ENCODE measurements at regions of chr6 and their contacts with region 1.

Region 1: GRCh38 chr6:35522660-35523658 is 10.3 kb upstream of the TULP1 start:
- DNase-seq: peak; percentile 59
- H3K4me3 ChIP-seq: peak overlapping the region in 1 of 3 experiments; percentile 21
- H3K27ac ChIP-seq: no peak overlapping the region
- H3K4me1 ChIP-seq: peaks cover 9% of the 10 kb centered on the region
- H3K27me3 ChIP-seq: no peaks in the 10 kb centered on the region
- CTCF ChIP-seq: peak; percentile 73 to 94

Region 2: GRCh38 chr6:34248727-34249551 is 1274.0 kb before region 1 on chr6 and contains the start of gene SMIM29:
- CTCF ChIA-PET with region 1: no interaction called
- dilution Hi-C with region 1: no loop called
- in situ Hi-C with region 1: no loop called
- intact Hi-C with region 1: no loop called
- DNase-seq: peak; percentile 94
- H3K4me3 ChIP-seq: peak within 1 kb of the TSS; percentile 83 to 95 (median 84)
- H3K27ac ChIP-seq: peak within 1 kb of the TSS; percentile 48
- H3K4me1 ChIP-seq: peaks cover 47% of the 10 kb centered on the region
- H3K27me3 ChIP-seq: no peaks in the 10 kb centered on the region
- CTCF ChIP-seq: peak; percentile 38 to 87
- total RNA-seq, gene SMIM29: 20.3 to 40.6 TPM

Region 3: GRCh38 chr6:35544523-35545313 is 21.8 kb after region 1 on chr6:
- CTCF ChIA-PET with region 1: interaction called, 29 read pairs
- dilution Hi-C with region 1: no loop called
- in situ Hi-C with region 1: no loop called
- intact Hi-C with region 1: no loop called
- DNase-seq: peak; percentile 58
- H3K4me3 ChIP-seq: no peak overlapping the region
- H3K27ac ChIP-seq: no peak overlapping the region
- H3K4me1 ChIP-seq: no peaks in the 10 kb centered on the region
- H3K27me3 ChIP-seq: no peaks in the 10 kb centered on the region
- CTCF ChIP-seq: no peak

Region 4: DNA sequence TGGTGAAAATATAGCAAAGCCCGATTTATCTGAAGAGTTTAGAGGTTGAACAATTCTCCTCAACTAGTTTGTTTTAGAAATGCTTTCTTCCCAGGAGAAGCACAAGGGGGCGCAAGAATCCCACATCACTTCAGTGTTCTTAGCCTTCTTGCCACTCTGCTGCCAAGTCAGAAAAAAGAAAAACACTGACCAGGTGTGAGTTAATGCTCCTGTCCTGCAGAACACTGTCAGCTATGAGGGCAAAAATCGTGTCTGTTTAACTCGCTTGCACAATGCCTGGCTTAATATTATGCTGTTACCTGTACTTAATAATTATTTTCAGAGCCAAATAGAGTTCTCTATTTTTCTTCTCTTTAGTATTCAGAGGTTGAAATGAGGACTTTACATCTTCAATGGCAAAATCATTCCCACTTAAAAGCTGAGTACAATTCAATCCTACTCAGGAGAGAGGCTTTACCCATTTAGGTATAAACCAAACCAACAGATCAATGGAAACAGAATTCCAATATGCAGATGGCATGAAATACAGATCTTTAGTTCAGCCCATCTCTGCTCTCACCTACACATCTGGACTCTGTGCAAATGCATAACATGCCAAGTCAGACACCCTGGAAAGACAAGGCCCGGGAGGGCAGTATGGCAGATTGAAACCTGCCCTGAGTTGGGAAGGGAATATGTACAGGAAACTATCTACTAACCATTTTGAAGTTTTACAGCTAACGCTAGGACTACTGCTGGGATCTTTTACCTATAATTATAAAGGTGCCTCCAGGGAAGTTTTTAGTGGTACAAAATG is 61.1 kb after region 1 on chr6:
- CTCF ChIA-PET with region 1: no interaction called
- dilution Hi-C with region 1: no loop called
- in situ Hi-C with region 1: no loop called
- intact Hi-C with region 1: loop called (anchors 1 kb)
- DNase-seq: peak; percentile 65
- H3K4me3 ChIP-seq: no peak overlapping the region
- H3K27ac ChIP-seq: peak overlapping the region; percentile 60
- H3K4me1 ChIP-seq: peaks cover 39% of the 10 kb centered on the region
- H3K27me3 ChIP-seq: no peaks in the 10 kb centered on the region
- CTCF ChIP-seq: peak; percentile 75 to 81

Region 5: GRCh38 chr6:35673755-35674154 is 150.8 kb after region 1 on chr6:
- CTCF ChIA-PET with region 1: interaction called, 11 read pairs
- dilution Hi-C with region 1: no loop called
- in situ Hi-C with region 1: no loop called
- intact Hi-C with region 1: no loop called
- DNase-seq: no peak
- H3K4me3 ChIP-seq: no peak overlapping the region
- H3K27ac ChIP-seq: no peak overlapping the region
- H3K4me1 ChIP-seq: peaks cover 12% of the 10 kb centered on the region
- H3K27me3 ChIP-seq: no peaks in the 10 kb centered on the region
- CTCF ChIP-seq: no peak

Region 6: GRCh38 chr6:35737413-35738211 is 214.7 kb after region 1 on chr6:
- CTCF ChIA-PET with region 1: interaction called, 11 read pairs
- dilution Hi-C with region 1: no loop called
- in situ Hi-C with region 1: loop called (anchors 5 to 10 kb)
- intact Hi-C with region 1: loop called (anchors 1 kb)
- DNase-seq: peak; percentile 68
- H3K4me3 ChIP-seq: no peak overlapping the region
- H3K27ac ChIP-seq: no peak overlapping the region
- H3K4me1 ChIP-seq: peaks cover 19% of the 10 kb centered on the region
- H3K27me3 ChIP-seq: no peaks in the 10 kb centered on the region
- CTCF ChIP-seq: peak; percentile 84 to 89

Region 7: GRCh38 chr6:36042618-36043260 is 519.8 kb after region 1 on chr6:
- CTCF ChIA-PET with region 1: interaction called, 10 read pairs
- dilution Hi-C with region 1: no loop called
- in situ Hi-C with region 1: no loop called
- intact Hi-C with region 1: no loop called
- DNase-seq: no peak
- H3K4me3 ChIP-seq: no peak overlapping the region
- H3K27ac ChIP-seq: no peak overlapping the region
- H3K4me1 ChIP-seq: peaks cover 17% of the 10 kb centered on the region
- H3K27me3 ChIP-seq: no peaks in the 10 kb centered on the region
- CTCF ChIP-seq: no peak